Mammary epithelial cell (primary cell): ENCODE measurements at regions of chr12 and their contacts with region 1.

Region 1: GRCh38 chr12:124734224-124734788 is 129.4 kb downstream of the SCARB1 start:
- DNase-seq: no peak
- H3K4me3 ChIP-seq: no peak overlapping the region
- H3K27ac ChIP-seq: no peak overlapping the region
- H3K4me1 ChIP-seq: peaks cover 7% of the 10 kb centered on the region
- H3K27me3 ChIP-seq: no peaks in the 10 kb centered on the region
- CTCF ChIP-seq: no peak

Region 2: GRCh38 chr12:124097701-124098100 is 636.6 kb before region 1 on chr12:
- CTCF ChIA-PET with region 1: no interaction called
- dilution Hi-C with region 1: loop called (anchors 10 kb)
- in situ Hi-C with region 1: no loop called
- intact Hi-C with region 1: no loop called
- DNase-seq: no peak
- H3K4me3 ChIP-seq: no peak overlapping the region
- H3K27ac ChIP-seq: no peak overlapping the region
- H3K4me1 ChIP-seq: no peaks in the 10 kb centered on the region
- H3K27me3 ChIP-seq: no peaks in the 10 kb centered on the region
- CTCF ChIP-seq: no peak

Region 3: GRCh38 chr12:124359671-124360581 is 374.4 kb before region 1 on chr12:
- CTCF ChIA-PET with region 1: no interaction called
- dilution Hi-C with region 1: loop called (anchors 10 kb)
- in situ Hi-C with region 1: no loop called
- intact Hi-C with region 1: no loop called
- DNase-seq: no peak
- H3K4me3 ChIP-seq: no peak overlapping the region
- H3K27ac ChIP-seq: no peak overlapping the region
- H3K4me1 ChIP-seq: peaks cover 11% of the 10 kb centered on the region
- H3K27me3 ChIP-seq: no peaks in the 10 kb centered on the region
- CTCF ChIP-seq: no peak

Region 4: GRCh38 chr12:124388679-124389536 is 345.4 kb before region 1 on chr12:
- CTCF ChIA-PET with region 1: no interaction called
- dilution Hi-C with region 1: loop called (anchors 10 kb)
- in situ Hi-C with region 1: no loop called
- intact Hi-C with region 1: no loop called
- DNase-seq: peak; percentile 69
- H3K4me3 ChIP-seq: peak overlapping the region in 2 of 3 experiments; percentile 22 to 32
- H3K27ac ChIP-seq: no peak overlapping the region
- H3K4me1 ChIP-seq: peaks cover 53% of the 10 kb centered on the region
- H3K27me3 ChIP-seq: no peaks in the 10 kb centered on the region
- CTCF ChIP-seq: no peak

Region 5: GRCh38 chr12:124441443-124442194 is 292.7 kb before region 1 on chr12:
- CTCF ChIA-PET with region 1: no interaction called
- dilution Hi-C with region 1: loop called (anchors 5 kb)
- in situ Hi-C with region 1: no loop called
- intact Hi-C with region 1: no loop called
- DNase-seq: no peak
- H3K4me3 ChIP-seq: no peak overlapping the region
- H3K27ac ChIP-seq: no peak overlapping the region
- H3K4me1 ChIP-seq: peaks cover 6% of the 10 kb centered on the region
- H3K27me3 ChIP-seq: no peaks in the 10 kb centered on the region
- CTCF ChIP-seq: no peak

Region 6: GRCh38 chr12:124625867-124626675 is 108.2 kb before region 1 on chr12:
- CTCF ChIA-PET with region 1: no interaction called
- dilution Hi-C with region 1: loop called (anchors 5 kb)
- in situ Hi-C with region 1: no loop called
- intact Hi-C with region 1: no loop called
- DNase-seq: peak; percentile 71
- H3K4me3 ChIP-seq: no peak overlapping the region
- H3K27ac ChIP-seq: no peak overlapping the region
- H3K4me1 ChIP-seq: peaks cover 37% of the 10 kb centered on the region
- H3K27me3 ChIP-seq: no peaks in the 10 kb centered on the region
- CTCF ChIP-seq: no peak

Region 7: DNA sequence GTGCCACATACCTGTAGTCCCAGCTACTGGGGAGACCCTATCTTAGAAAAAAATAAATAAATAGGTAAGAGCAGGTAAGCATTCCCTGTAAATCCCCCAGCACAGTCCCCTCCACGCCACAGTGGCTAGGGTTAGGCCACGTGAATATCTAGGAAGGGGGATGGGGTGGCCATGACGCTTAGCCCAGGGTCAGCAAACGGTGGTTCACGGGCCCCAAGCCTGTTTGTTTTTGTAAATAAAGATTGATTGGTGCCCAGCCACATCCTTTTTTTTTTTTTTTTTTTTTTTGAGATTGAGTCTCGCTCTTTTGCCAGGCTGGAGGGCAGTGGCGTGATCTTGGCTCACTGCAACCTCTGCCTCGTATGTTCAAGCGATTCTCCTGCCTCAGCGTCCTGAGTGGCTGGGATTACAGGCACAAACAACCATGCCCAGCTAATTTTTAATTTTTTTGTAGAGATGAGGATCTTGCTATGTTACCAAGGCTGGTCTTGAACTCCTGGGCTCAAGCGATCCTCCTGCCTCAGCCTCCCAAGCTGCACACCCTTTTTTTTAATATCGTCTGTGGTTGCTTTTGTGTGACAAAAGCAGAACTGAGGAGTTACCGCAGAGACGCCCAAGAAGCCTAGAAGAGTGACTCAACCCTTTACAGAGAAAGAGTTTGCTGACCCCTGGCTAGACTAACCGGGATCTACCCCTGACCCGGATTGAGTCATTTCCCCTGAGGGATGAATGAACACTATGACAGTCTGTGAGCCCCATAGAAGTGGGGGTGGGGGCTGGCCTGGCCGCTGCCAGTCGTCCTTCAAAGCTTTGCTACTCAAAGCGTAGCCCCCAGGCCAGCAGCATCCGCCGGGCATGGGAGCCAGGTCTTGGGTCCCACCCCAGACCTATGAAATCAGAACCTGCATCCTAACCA is 53.2 kb before region 1 on chr12:
- CTCF ChIA-PET with region 1: no interaction called
- dilution Hi-C with region 1: loop called (anchors 5 kb)
- in situ Hi-C with region 1: no loop called
- intact Hi-C with region 1: no loop called
- DNase-seq: peak; percentile 97
- H3K4me3 ChIP-seq: no peak overlapping the region
- H3K27ac ChIP-seq: peak overlapping the region; percentile 42
- H3K4me1 ChIP-seq: peaks cover 43% of the 10 kb centered on the region
- H3K27me3 ChIP-seq: no peaks in the 10 kb centered on the region
- CTCF ChIP-seq: peak; percentile 34 to 61